ENCODE measurements at regions of chr20 and their contacts with region 1.

Region 1: DNA sequence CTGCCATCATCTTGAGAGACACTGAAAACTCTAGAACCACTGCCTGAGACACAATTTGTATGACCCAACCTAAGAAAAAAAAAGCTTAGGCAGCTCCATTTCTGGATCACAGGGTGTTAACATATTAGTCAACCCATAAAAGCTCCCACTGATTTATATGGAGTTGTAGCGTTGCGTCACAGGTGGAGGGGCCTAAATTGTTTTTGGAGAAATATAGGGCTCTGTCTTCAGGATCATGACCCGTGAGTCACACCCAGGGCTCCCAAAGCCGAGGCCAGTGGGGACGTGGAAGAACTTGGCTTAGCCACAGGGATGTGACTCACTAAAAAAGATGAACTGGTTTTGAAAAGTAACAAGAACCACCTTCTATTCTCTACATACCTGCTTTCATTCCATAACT is 116.5 kb upstream of the BMP2 start:
- DNase-seq: peak; percentile 99
- H3K4me3 Mint-ChIP-seq: no peak overlapping the region
- H3K27ac Mint-ChIP-seq: peak overlapping the region; percentile 46
- H3K4me1 Mint-ChIP-seq: peaks cover 34% of the 10 kb centered on the region
- H3K27me3 Mint-ChIP-seq: no peaks in the 10 kb centered on the region
- CTCF ChIP-seq: no peak

Region 2: DNA sequence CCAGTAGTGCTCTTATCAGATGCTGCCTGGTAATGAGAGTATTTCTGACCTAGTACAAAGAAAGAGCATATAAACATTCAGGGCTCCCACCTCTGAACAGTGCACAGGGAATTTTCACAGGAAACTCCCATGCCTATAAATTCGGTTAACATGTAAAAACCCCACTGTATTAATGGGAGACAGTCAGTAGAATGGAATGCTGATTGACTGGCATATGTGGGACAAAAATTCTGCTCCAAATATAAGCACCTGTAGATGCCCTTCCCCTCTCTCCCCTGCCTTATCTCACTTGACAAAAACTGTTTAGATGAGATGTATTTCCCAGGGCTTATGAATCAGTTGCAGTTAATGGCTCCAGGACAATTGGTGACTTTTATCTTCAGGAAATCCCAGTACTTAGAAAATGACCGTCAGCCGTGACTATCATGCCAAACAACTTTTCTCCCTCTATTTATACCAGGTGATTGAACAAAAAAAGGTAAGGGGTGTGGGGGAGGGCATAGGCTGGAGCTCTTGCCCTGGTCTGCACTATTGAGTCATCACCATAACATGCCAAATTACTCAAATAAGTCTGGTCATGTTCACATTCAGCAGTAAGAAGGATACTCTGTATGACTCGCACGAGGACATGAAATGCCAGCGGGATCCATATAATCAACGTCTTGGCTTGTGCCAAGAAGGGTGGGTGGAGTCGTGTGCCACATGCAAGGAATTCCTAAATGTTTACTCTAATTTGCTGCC is 60.0 kb before region 1 on chr20:
- CTCF ChIA-PET with region 1: no interaction called
- POLR2A ChIA-PET with region 1: interaction called, 14 read pairs
- intact Hi-C with region 1: no loop called
- DNase-seq: peak; percentile 98
- H3K4me3 Mint-ChIP-seq: peak overlapping the region; percentile 40
- H3K27ac Mint-ChIP-seq: peak overlapping the region; percentile 95
- H3K4me1 Mint-ChIP-seq: peaks cover 32% of the 10 kb centered on the region
- H3K27me3 Mint-ChIP-seq: no peaks in the 10 kb centered on the region
- CTCF ChIP-seq: no peak

Region 3: GRCh38 chr20:6663104-6663503 is 12.1 kb after region 1 on chr20:
- CTCF ChIA-PET with region 1: interaction called, 13 read pairs
- POLR2A ChIA-PET with region 1: interaction called, 57 read pairs
- intact Hi-C with region 1: no loop called
- DNase-seq: peak; percentile 13
- H3K4me3 Mint-ChIP-seq: no peak overlapping the region
- H3K27ac Mint-ChIP-seq: no peak overlapping the region
- H3K4me1 Mint-ChIP-seq: peaks cover 28% of the 10 kb centered on the region
- H3K27me3 Mint-ChIP-seq: no peaks in the 10 kb centered on the region
- CTCF ChIP-seq: no peak

Region 4: DNA sequence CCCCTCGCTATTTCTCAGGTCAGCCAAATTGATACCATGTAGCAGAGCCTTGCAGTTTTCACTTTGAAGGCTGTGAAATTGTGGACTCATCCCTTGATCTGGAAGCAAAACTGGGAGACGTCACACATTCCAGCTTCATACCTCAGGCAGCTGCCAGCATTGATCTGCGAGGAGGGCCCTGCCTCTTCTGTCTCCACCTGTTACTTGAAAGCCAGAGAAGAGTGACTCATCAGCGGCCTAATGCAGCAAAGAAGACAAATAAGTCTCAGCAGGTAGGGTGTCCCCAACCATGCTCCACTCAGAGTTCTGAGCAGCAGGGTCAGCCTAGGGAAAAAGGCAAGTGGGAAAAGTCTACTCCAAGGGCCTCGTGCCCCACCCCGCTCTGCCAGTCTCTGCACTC is 47.0 kb after region 1 on chr20:
- CTCF ChIA-PET with region 1: no interaction called
- POLR2A ChIA-PET with region 1: interaction called, 11 read pairs
- intact Hi-C with region 1: no loop called
- DNase-seq: peak; percentile 69
- H3K4me3 Mint-ChIP-seq: no peak overlapping the region
- H3K27ac Mint-ChIP-seq: no peak overlapping the region
- H3K4me1 Mint-ChIP-seq: peaks cover 32% of the 10 kb centered on the region
- H3K27me3 Mint-ChIP-seq: no peaks in the 10 kb centered on the region
- CTCF ChIP-seq: no peak

Region 5: GRCh38 chr20:6708010-6708409 is 57.0 kb after region 1 on chr20:
- CTCF ChIA-PET with region 1: interaction called, 8 read pairs
- POLR2A ChIA-PET with region 1: interaction called, 63 read pairs
- intact Hi-C with region 1: no loop called
- DNase-seq: peak; percentile 83
- H3K4me3 Mint-ChIP-seq: peak overlapping the region; percentile 29
- H3K27ac Mint-ChIP-seq: peak overlapping the region; percentile 85
- H3K4me1 Mint-ChIP-seq: peaks cover 67% of the 10 kb centered on the region
- H3K27me3 Mint-ChIP-seq: no peaks in the 10 kb centered on the region
- CTCF ChIP-seq: no peak

Region 6: DNA sequence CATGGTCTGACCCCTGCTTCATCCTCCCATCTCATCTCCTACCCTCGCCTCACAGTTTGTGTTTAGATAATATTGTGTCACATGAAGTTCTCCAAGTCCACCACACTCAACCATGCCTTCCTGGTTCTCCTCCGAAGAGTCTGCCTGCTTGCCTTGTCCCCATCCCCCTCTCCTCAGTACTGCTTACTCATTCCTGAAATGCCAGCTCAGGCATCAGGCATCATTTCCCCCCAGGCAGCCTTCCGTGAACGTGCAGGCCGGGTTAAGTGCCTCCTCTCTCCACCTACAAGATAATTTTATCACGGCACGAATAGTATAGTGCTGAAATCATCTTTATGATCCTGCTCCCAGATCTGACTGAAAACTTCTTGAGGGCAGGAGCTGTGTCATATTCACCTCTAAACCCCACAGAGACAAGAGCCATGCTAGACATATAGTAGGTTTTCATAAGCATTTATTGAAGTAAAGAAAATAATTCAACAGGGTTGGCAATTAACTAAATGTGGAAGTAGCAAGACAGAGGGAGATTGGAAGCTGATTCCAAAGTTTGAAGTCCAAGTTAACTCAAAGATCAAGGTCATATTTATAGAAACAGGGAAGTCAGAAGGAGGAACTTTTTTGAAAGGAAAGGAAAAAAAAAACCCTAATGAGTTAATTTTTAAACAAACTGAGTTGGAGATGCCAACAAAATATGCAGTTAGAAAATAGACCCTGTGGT is 67.8 kb after region 1 on chr20:
- CTCF ChIA-PET with region 1: no interaction called
- POLR2A ChIA-PET with region 1: interaction called, 11 read pairs
- intact Hi-C with region 1: no loop called
- DNase-seq: peak; percentile 75
- H3K4me3 Mint-ChIP-seq: no peak overlapping the region
- H3K27ac Mint-ChIP-seq: peak overlapping the region; percentile 74
- H3K4me1 Mint-ChIP-seq: peaks cover 9% of the 10 kb centered on the region
- H3K27me3 Mint-ChIP-seq: no peaks in the 10 kb centered on the region
- CTCF ChIP-seq: no peak